Left colon (tissue), 2 donors: ENCODE measurements at regions of chr2 and their contacts with region 1.

Region 1: DNA sequence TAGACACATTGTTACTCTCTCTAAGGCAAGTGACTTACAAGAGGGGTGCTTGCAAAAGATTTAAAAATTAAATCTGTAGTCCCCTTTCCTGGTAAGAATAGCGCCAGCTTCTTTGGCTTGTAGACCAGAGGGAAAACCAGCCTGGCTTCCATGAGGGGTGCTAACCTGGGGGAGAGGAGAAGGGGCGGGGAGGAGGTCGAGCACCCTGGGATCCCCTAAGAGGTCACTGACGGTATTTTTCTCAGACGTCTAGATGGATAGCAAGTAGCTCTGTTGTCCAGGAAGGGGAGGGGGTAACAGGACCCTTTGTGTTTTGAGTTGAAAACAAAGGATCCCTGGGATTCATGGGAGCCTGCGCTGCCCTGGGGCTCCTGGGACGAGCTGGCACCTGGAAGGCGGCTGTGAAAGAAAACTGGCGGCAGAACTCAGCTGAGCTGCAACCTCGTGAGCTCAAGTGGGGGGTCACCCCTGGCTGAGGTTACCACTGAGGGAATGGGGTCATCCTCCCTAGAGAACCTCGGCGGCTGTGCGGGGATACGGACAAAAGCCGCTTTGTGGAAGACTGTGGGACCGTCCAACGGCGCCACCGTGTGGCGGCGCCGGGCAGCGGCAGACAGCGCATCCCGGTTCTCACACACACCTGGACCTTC is 37.8 kb upstream of the MRPL19 start:
- DNase-seq: peak in 1 of 2 donors; percentile 53
- ATAC-seq: peak; percentile 88

Region 2: GRCh38 chr2:75464348-75464946 is 144.4 kb before region 1 on chr2:
- intact Hi-C with region 1: loop called in 1 of 2 experiments (anchors 5 kb)
- DNase-seq: no peak
- ATAC-seq: no peak

Region 3: GRCh38 chr2:76019128-76019527 is 410.3 kb after region 1 on chr2:
- intact Hi-C with region 1: no loop called
- DNase-seq: no peak
- ATAC-seq: peak; percentile 37